Adrenal gland (tissue), 19 donors: ENCODE measurements at regions of chr3 and their contacts with region 1.

Region 1: GRCh38 chr3:3209714-3210113 is 30.2 kb upstream of the CRBN start:
- DNase-seq: no peak
- H3K4me3 ChIP-seq: no peak overlapping the region
- H3K27ac ChIP-seq: no peak overlapping the region
- H3K4me1 ChIP-seq: no peaks in the 10 kb centered on the region
- H3K27me3 ChIP-seq: no peaks in the 10 kb centered on the region
- CTCF ChIP-seq: no peak
- POLR2A ChIP-seq: no peak

Region 2: GRCh38 chr3:4011166-4011565 is 801.5 kb after region 1 on chr3:
- intact Hi-C with region 1: loop called in 1 of 2 experiments (anchors 10 kb)
- DNase-seq: no peak
- H3K4me3 ChIP-seq: no peak overlapping the region
- H3K27ac ChIP-seq: no peak overlapping the region
- H3K4me1 ChIP-seq: no peaks in the 10 kb centered on the region
- H3K27me3 ChIP-seq: no peaks in the 10 kb centered on the region
- CTCF ChIP-seq: no peak
- POLR2A ChIP-seq: no peak